Natural killer cell (primary cell): ENCODE measurements at regions of chr1 and their contacts with region 1.

Region 1: DNA sequence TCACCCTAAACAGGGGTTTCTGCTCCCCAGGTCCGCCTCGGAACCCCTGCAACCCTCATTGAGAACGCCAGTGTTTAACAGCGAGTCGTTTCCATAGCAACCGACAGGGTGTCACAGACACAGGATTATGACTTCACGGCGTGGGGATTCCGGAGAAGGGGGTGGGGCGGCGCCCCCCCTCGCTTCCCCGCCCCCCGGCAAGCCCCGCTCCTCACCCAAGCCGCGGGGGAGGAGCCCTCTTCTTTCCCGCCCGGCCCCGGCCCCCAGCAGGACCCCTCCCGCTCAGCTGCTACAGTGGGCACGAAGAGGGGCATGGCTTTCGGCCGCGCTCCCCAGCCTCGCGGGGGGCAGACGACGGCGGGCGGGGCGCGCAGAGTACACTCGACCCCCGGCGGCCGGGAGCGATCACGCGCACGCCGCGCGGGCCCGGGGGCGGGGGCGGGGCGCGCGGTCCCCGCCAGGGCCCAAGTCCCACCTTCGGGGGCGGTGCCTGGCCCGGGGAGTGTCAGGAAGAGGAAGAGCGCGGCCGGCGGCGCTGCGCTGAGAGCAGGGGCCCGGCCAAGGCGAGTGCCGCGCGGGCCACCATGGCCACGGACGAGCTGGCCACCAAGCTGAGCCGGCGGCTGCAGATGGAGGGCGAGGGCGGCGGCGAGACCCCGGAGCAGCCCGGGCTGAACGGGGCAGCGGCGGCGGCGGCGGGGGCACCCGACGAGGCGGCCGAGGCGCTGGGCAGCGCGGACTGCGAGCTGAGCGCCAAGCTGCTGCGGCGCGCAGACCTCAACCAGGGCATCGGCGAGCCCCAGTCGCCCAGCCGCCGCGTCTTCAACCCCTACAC is at the start of gene EFHD2:
- DNase-seq: peak; percentile 93 to 99
- ATAC-seq: peak; percentile 47 to 79 (median 66)
- H3K4me3 ChIP-seq: peak within 1 kb of the TSS; percentile 97
- H3K4me3 Mint-ChIP-seq: peak within 1 kb of the TSS; percentile 97
- H3K27ac ChIP-seq: peak within 1 kb of the TSS; percentile 99
- H3K27ac Mint-ChIP-seq: peak within 1 kb of the TSS; percentile 93 to 100
- H3K4me1 ChIP-seq: peaks cover 81% of the 10 kb centered on the region
- H3K4me1 Mint-ChIP-seq: peaks cover 76 to 85% of the 10 kb centered on the region in 2 donors
- H3K27me3 ChIP-seq: no peaks in the 10 kb centered on the region
- H3K27me3 Mint-ChIP-seq: no peaks in the 10 kb centered on the region
- CTCF ChIP-seq: no peak
- total RNA-seq, gene EFHD2: 804 to 952 (median 855) TPM

Region 2: GRCh38 chr1:14404862-14405301 is 1004.7 kb before region 1 on chr1:
- intact Hi-C with region 1: no loop called
- DNase-seq: no peak
- ATAC-seq: no peak
- H3K4me3 ChIP-seq: no peak overlapping the region
- H3K4me3 Mint-ChIP-seq: no peak overlapping the region
- H3K27ac ChIP-seq: no peak overlapping the region
- H3K27ac Mint-ChIP-seq: no peak overlapping the region
- H3K4me1 ChIP-seq: no peaks in the 10 kb centered on the region
- H3K4me1 Mint-ChIP-seq: no peaks in the 10 kb centered on the region
- H3K27me3 ChIP-seq: no peaks in the 10 kb centered on the region
- H3K27me3 Mint-ChIP-seq: peaks cover 14 to 34% of the 10 kb centered on the region in 2 donors
- CTCF ChIP-seq: no peak

Region 3: GRCh38 chr1:15246960-15247614 is 162.5 kb before region 1 on chr1 and contains the start of gene FHAD1:
- intact Hi-C with region 1: loop called (anchors 2 kb)
- DNase-seq: peak; percentile 70 to 71
- ATAC-seq: peak; percentile 63 to 80 (median 66)
- H3K4me3 ChIP-seq: no peak within 1 kb of the TSS
- H3K4me3 Mint-ChIP-seq: peak within 1 kb of the TSS; percentile 77
- H3K27ac ChIP-seq: no peak within 1 kb of the TSS
- H3K27ac Mint-ChIP-seq: peak within 1 kb of the TSS; percentile 14 to 91
- H3K4me1 ChIP-seq: peaks cover 36% of the 10 kb centered on the region
- H3K4me1 Mint-ChIP-seq: peaks cover 52 to 53% of the 10 kb centered on the region in 2 donors
- H3K27me3 ChIP-seq: peaks cover 6% of the 10 kb centered on the region
- H3K27me3 Mint-ChIP-seq: peaks cover 9 to 22% of the 10 kb centered on the region in 2 donors
- CTCF ChIP-seq: no peak
- total RNA-seq, gene FHAD1: 0.72 to 1.9 (median 1.7) TPM

Region 4: DNA sequence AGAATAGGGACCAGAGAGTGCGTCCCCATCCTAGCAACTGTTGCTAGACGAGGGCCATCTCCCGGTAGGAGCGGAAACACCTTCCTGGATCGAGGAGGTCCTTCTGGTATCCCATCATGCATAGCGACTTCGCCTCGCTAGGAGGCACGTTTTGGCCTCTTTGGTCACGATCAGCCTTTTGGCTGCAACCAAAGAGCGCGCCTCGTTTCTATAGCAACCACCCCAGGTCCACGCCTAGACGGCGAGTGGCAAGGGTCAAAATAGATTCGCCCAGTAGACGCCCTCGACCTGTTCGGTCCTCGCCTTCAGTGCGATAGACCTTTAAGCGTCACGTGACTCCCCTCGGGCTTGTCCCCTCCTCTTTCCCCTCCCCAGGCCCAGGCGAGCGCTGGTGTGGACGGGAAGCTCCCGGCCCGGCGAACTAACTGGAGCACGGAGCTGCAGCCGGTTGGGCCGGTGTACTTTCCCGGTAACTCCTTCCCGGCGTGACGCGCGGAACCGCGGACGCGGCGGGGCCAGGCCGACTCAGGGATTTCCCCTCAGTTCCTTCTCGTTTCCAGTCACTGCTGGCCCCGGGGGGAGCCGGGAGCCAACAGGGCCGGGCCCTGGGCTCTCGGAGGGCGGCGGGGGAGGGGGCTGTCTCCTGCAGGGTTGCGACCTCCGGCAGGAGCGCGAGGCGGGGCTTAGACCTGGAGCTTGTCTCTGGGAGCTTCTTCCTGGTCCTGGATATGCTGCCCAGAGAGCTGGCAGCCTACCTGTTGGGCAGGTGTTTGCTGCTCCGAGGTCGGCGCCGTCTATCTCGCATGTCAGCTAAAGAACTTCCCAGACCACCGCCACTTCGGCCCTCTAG is 117.1 kb after region 1 on chr1 and contains the start of gene DNAJC16:
- intact Hi-C with region 1: loop called (anchors 5 kb)
- DNase-seq: peak; percentile 93 to 99
- ATAC-seq: peak; percentile 32 to 58 (median 44)
- H3K4me3 ChIP-seq: peak within 1 kb of the TSS; percentile 73
- H3K4me3 Mint-ChIP-seq: peak within 1 kb of the TSS; percentile 94
- H3K27ac ChIP-seq: peak within 1 kb of the TSS; percentile 100
- H3K27ac Mint-ChIP-seq: peak within 1 kb of the TSS; percentile 96 to 100
- H3K4me1 ChIP-seq: peaks cover 30% of the 10 kb centered on the region
- H3K4me1 Mint-ChIP-seq: peaks cover 45 to 48% of the 10 kb centered on the region in 2 donors
- H3K27me3 ChIP-seq: no peaks in the 10 kb centered on the region
- H3K27me3 Mint-ChIP-seq: no peaks in the 10 kb centered on the region
- CTCF ChIP-seq: no peak
- total RNA-seq, gene DNAJC16: 18.6 to 22.8 (median 18.7) TPM